ENCODE measurements at regions of chr1 and their contacts with region 1.

Region 1: GRCh38 chr1:54488779-54489626 is 59.0 kb upstream of the ACOT11 start:
- DNase-seq: peak; percentile 81 to 84
- ATAC-seq: peak; percentile 73 to 84 (median 82)
- H3K4me3 ChIP-seq: peak overlapping the region; percentile 40 to 75 (median 66)
- H3K27ac ChIP-seq: peak overlapping the region; percentile 76 to 97 (median 93)
- H3K4me1 ChIP-seq: peaks cover 7 to 39% (median 23%) of the 10 kb centered on the region in 9 donors
- H3K27me3 ChIP-seq: no peaks in the 10 kb centered on the region
- CTCF ChIP-seq: peak; percentile 83 to 99 (median 97)

Region 2: DNA sequence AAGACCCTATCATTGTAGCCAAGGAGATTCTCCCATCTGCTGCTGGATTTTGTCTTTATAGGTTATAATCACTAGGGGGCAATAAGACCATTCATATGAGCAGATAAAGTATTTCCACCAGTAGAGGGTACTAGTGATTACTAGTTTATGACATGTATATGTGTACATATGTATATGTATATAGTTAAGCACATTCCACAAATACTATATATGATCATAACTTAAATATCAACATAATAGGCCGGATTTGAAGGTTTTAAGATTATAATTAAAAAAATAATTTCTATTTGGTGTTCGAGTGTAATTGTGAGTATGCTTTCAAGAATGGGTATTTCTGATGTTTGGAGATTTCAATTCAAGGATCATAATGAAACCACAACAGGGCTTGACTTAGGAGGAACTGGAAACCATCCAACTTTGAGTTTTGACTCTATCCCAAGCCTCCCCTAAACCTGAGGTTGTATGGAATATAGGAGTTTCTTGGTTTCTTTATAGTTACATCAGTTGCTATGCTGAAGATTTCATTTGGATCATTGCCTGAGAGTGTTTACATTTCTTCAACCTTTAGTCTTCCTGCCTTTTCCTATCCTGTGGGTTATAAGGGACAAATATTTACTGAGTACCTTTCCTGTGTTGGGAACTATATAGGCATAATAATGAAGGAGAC is 418.7 kb before region 1 on chr1:
- intact Hi-C with region 1: loop called in 8 of 10 experiments (anchors 2 to 5 kb)
- DNase-seq: no peak
- ATAC-seq: peak; percentile 53 to 73 (median 64)
- H3K4me3 ChIP-seq: no peak overlapping the region
- H3K27ac ChIP-seq: no peak overlapping the region
- H3K4me1 ChIP-seq: no peaks in the 10 kb centered on the region
- H3K27me3 ChIP-seq: no peaks in the 10 kb centered on the region
- CTCF ChIP-seq: peak; percentile 40 to 92 (median 76)

Region 3: DNA sequence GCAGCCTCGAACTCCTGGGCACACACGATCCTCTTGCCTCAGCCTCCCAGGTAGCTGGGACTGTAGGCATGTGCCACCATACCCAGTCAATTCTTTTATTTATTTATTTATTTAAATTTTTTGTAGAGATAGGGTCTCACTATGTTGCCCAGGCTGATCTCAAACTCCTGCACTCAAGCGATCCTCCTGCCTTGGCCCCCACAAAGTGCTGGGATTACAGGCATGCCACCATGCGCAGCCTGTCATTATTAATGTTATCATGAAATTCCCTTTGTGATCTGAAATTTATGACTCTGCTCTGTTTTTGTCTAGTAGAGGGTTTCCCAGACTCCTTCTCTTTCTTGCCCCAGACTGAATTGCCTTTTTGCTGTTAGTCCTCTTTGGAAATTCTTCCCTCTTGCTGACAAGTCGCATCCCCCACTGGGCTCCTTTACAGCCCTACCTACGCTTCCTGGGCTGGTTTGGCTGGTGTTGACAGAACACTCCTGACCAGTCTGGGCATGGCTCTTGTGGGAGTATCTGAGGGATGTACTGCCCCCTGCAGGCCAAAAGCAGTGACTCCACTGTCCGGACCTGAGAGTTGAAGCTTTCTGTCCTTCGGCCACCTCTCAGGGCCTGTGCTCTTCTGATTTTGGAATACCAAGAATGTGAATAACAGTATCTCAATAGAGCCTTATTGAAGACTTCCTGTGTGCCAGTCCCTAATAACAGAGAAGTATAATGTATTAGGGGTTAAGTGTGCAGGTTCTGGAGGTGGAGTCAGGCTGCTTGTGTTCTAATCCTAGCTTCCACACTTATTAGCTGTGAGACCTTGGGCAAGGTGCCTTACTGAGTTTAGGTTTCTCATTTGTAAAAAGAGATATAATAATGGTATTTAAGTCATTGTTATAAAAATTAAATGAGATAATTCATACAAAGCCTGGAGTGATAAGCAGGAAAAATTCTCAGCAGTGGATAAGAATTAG is 407.4 kb before region 1 on chr1:
- intact Hi-C with region 1: no loop called
- DNase-seq: peak; percentile 26 to 30
- ATAC-seq: peak in 7 of 8 donors; percentile 34 to 76 (median 70)
- H3K4me3 ChIP-seq: no peak overlapping the region
- H3K27ac ChIP-seq: no peak overlapping the region
- H3K4me1 ChIP-seq: peaks cover 0 to 4% (median 3%) of the 10 kb centered on the region in 9 donors
- H3K27me3 ChIP-seq: no peaks in the 10 kb centered on the region
- CTCF ChIP-seq: peak in 8 of 9 donors; percentile 53 to 81 (median 62)

Region 4: GRCh38 chr1:54180701-54181360 is 308.2 kb before region 1 on chr1:
- intact Hi-C with region 1: loop called in 1 of 10 experiments (anchors 5 kb)
- DNase-seq: no peak
- ATAC-seq: no peak
- H3K4me3 ChIP-seq: no peak overlapping the region
- H3K27ac ChIP-seq: no peak overlapping the region
- H3K4me1 ChIP-seq: no peaks in the 10 kb centered on the region
- H3K27me3 ChIP-seq: no peaks in the 10 kb centered on the region
- CTCF ChIP-seq: no peak

Region 5: GRCh38 chr1:54220004-54220811 is 268.8 kb before region 1 on chr1:
- intact Hi-C with region 1: loop called in 1 of 10 experiments (anchors 10 kb)
- DNase-seq: peak; percentile 68 to 69
- ATAC-seq: peak; percentile 62 to 84 (median 77)
- H3K4me3 ChIP-seq: peak overlapping the region in 5 of 10 donors; percentile 13 to 25 (median 21)
- H3K27ac ChIP-seq: peak overlapping the region in 9 of 10 donors; percentile 9 to 71 (median 59)
- H3K4me1 ChIP-seq: peaks cover 6 to 39% (median 28%) of the 10 kb centered on the region in 9 donors
- H3K27me3 ChIP-seq: no peaks in the 10 kb centered on the region
- CTCF ChIP-seq: no peak

Region 6: GRCh38 chr1:54310439-54311328 is 178.3 kb before region 1 on chr1:
- intact Hi-C with region 1: loop called in 7 of 10 experiments (anchors 2 to 10 kb)
- DNase-seq: peak; percentile 57 to 68
- ATAC-seq: peak in 6 of 8 donors; percentile 22 to 52 (median 43)
- H3K4me3 ChIP-seq: no peak overlapping the region
- H3K27ac ChIP-seq: peak overlapping the region in 6 of 10 donors; percentile 19 to 88 (median 74)
- H3K4me1 ChIP-seq: peaks cover 14 to 92% (median 83%) of the 10 kb centered on the region in 9 donors
- H3K27me3 ChIP-seq: no peaks in the 10 kb centered on the region
- CTCF ChIP-seq: peak; percentile 16 to 71 (median 67)

Measured in heart right ventricle (tissue), 16 donors.